ENCODE measurements at regions of chr14 and their contacts with region 1.

Region 1: GRCh38 chr14:24114536-24115450 is at the starts of genes DCAF11 and NRL:
- DNase-seq: peak; percentile 100
- H3K4me3 ChIP-seq: peak within 1 kb of the TSS; percentile 87 to 90 (median 89)
- H3K4me3 Mint-ChIP-seq: peak within 1 kb of the TSS; percentile 89 to 95
- H3K27ac ChIP-seq: peak within 1 kb of the TSS; percentile 99 to 100
- H3K27ac Mint-ChIP-seq: peak within 1 kb of the TSS; percentile 98 to 99 (median 99)
- H3K4me1 ChIP-seq: peaks cover 19 to 27% of the 10 kb centered on the region in 2 donors
- H3K4me1 Mint-ChIP-seq: peaks cover 18% of the 10 kb centered on the region
- H3K27me3 ChIP-seq: no peaks in the 10 kb centered on the region
- H3K27me3 Mint-ChIP-seq: peaks cover 0 to 6% (median 2%) of the 10 kb centered on the region in 3 donors
- CTCF ChIP-seq: no peak
- polyA plus RNA-seq, gene DCAF11: 45.6 to 56.6 (median 48.8) TPM
- polyA plus RNA-seq, gene NRL: 1.1 to 1.5 (median 1.3) TPM

Region 2: DNA sequence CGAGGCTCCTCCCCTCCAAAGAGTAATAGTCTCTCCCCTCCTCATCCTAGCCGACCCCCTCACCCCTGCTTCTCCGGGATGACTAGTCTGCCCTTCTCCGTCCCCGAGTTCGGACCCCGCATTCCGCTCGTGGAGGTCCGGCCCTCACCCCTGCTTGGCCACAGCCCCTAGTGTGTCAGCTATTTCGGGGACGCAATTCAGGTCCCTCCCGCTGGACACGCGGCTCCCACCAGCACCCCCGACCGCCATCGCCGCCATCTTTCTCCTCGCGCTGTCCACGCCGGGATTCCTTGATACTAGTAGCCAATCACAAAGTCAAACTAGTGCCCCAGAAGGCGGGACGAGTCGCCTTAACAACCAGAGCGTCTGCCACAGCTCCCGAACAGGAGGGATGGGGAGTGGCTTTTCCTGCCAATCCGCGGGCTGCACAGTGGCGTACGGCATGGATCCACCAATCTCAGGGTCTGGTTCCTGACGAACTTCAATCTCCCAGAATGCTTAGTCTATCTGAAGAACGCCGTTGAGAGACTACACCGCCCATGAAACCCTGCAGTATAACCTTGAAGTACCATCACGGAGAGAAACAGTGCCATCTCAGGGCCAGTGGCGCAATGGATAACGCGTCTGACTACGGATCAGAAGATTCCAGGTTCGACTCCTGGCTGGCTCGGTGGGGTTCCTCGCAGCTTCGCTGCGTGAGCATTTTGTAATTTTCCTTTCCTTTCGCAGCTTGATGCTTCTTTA is 1185.5 kb before region 1 on chr14 and contains the start of gene PRMT5:
- intact Hi-C with region 1: loop called in 1 of 2 experiments (anchors 10 kb)
- DNase-seq: peak; percentile 99 to 100 (median 99)
- H3K4me3 ChIP-seq: peak within 1 kb of the TSS; percentile 90 to 98 (median 96)
- H3K4me3 Mint-ChIP-seq: no peak within 1 kb of the TSS
- H3K27ac ChIP-seq: peak within 1 kb of the TSS; percentile 65 to 86
- H3K27ac Mint-ChIP-seq: peak within 1 kb of the TSS in 2 of 7 donors; percentile 28 to 85
- H3K4me1 ChIP-seq: peaks cover 19 to 34% of the 10 kb centered on the region in 2 donors
- H3K4me1 Mint-ChIP-seq: peaks cover 8% of the 10 kb centered on the region
- H3K27me3 ChIP-seq: no peaks in the 10 kb centered on the region
- H3K27me3 Mint-ChIP-seq: no peaks in the 10 kb centered on the region
- CTCF ChIP-seq: no peak
- polyA plus RNA-seq, gene PRMT5: 38.7 to 44.4 (median 44.1) TPM

Region 3: GRCh38 chr14:24155100-24155499 is 40.3 kb after region 1 on chr14:
- intact Hi-C with region 1: no loop called
- DNase-seq: no peak
- H3K4me3 ChIP-seq: no peak overlapping the region
- H3K4me3 Mint-ChIP-seq: no peak overlapping the region
- H3K27ac ChIP-seq: peak overlapping the region in 1 of 2 donors; percentile 20
- H3K27ac Mint-ChIP-seq: peak overlapping the region in 4 of 7 donors; percentile 26 to 80 (median 42)
- H3K4me1 ChIP-seq: peaks cover under 1 to 5% of the 10 kb centered on the region in 2 donors
- H3K4me1 Mint-ChIP-seq: peaks cover 9% of the 10 kb centered on the region
- H3K27me3 ChIP-seq: no peaks in the 10 kb centered on the region
- H3K27me3 Mint-ChIP-seq: peaks cover 0 to 2% (median 0%) of the 10 kb centered on the region in 3 donors
- CTCF ChIP-seq: no peak

Region 4: DNA sequence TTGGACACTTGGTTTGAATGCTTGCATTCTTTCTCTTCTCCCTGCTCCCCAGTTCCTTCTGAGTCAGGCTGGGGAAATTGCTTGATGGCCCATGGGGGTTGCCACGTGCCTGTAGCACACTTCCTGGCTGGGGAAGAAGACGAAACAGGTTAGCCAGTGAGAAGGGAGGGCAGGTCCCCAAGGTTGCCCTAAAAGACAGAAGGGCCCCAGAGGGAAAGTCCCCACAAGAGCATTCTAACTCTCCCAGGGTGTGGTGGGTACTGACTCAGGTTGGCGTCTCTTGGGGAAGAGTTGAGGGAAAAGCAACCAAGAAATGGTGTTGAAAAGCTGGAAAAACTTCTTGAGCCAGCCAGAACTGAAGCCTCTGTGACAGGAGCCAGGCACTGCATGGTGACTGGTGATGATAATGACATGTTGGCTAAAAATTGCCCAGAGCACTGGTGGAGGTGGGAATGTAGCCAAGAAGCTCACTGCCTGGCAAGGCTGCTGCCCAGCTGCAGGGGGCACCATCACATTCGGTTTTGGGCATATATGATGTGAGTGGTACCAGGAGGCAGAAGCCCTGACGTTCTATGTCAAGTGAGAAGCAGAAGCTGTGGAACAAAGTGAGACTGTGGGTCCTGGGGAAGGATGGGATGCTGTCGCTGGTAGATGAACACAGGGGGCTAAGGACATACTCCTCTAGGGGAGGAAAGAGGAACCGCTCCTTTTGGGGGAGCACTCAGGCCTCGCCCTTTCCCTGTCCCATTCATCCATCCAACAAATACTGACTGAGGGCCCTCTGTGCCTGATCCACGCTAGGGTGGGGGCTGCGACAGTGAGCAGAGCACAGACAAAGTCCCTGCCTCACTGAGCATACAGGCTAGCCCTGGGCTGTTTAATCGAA is 164.8 kb after region 1 on chr14:
- intact Hi-C with region 1: no loop called
- DNase-seq: peak; percentile 52 to 92 (median 57)
- H3K4me3 ChIP-seq: peak overlapping the region in 1 of 3 experiments; percentile 55
- H3K4me3 Mint-ChIP-seq: peak overlapping the region in 1 of 2 donors; percentile 7
- H3K27ac ChIP-seq: peak overlapping the region; percentile 58 to 98
- H3K27ac Mint-ChIP-seq: peak overlapping the region; percentile 91 to 99 (median 95)
- H3K4me1 ChIP-seq: peaks cover 83 to 84% of the 10 kb centered on the region in 2 donors
- H3K4me1 Mint-ChIP-seq: peaks cover 81% of the 10 kb centered on the region
- H3K27me3 ChIP-seq: no peaks in the 10 kb centered on the region
- H3K27me3 Mint-ChIP-seq: peaks cover 0 to 4% (median 3%) of the 10 kb centered on the region in 3 donors
- CTCF ChIP-seq: peak; percentile 46

Measured in CD14-positive monocyte (primary cell).